ENCODE measurements at regions of chr17 and their contacts with region 1.

Region 1: GRCh38 chr17:8118769-8119580 is 661 bp upstream of the ALOXE3 start:
- DNase-seq: peak; percentile 75 to 92 (median 81)
- ATAC-seq: peak; percentile 60
- H3K4me3 ChIP-seq: peak overlapping the region; percentile 57
- H3K4me3 Mint-ChIP-seq: peak overlapping the region; percentile 99
- H3K27ac ChIP-seq: peak overlapping the region; percentile 7 to 50
- H3K27ac Mint-ChIP-seq: peak overlapping the region; percentile 100
- H3K4me1 ChIP-seq: peaks cover 65% of the 10 kb centered on the region
- H3K4me1 Mint-ChIP-seq: peaks cover 53% of the 10 kb centered on the region
- H3K27me3 ChIP-seq: peaks cover 45 to 53% of the 10 kb centered on the region in 2 experiments
- H3K27me3 Mint-ChIP-seq: peaks cover 66% of the 10 kb centered on the region
- CTCF ChIP-seq: peak; percentile 81

Region 2: GRCh38 chr17:8073627-8074484 is 45.1 kb before region 1 on chr17:
- CTCF ChIA-PET with region 1: interaction called, 22 read pairs
- POLR2A ChIA-PET with region 1: interaction called, 24 read pairs
- intact Hi-C with region 1: loop called in 1 of 2 experiments (anchors 2 kb)
- DNase-seq: peak; percentile 75 to 95 (median 83)
- ATAC-seq: peak; percentile 94
- H3K4me3 ChIP-seq: peak overlapping the region; percentile 31
- H3K4me3 Mint-ChIP-seq: peak overlapping the region; percentile 87
- H3K27ac ChIP-seq: no peak overlapping the region
- H3K27ac Mint-ChIP-seq: peak overlapping the region; percentile 18
- H3K4me1 ChIP-seq: peaks cover 25% of the 10 kb centered on the region
- H3K4me1 Mint-ChIP-seq: peaks cover 26% of the 10 kb centered on the region
- H3K27me3 ChIP-seq: peaks cover 27 to 39% of the 10 kb centered on the region in 2 experiments
- H3K27me3 Mint-ChIP-seq: peaks cover 44% of the 10 kb centered on the region
- CTCF ChIP-seq: peak; percentile 91

Region 3: GRCh38 chr17:8091033-8091687 is 27.8 kb before region 1 on chr17:
- CTCF ChIA-PET with region 1: interaction called, 24 read pairs
- POLR2A ChIA-PET with region 1: interaction called, 8 read pairs
- intact Hi-C with region 1: loop called in 1 of 2 experiments (anchors 2 kb)
- DNase-seq: no peak
- ATAC-seq: no peak
- H3K4me3 ChIP-seq: no peak overlapping the region
- H3K4me3 Mint-ChIP-seq: no peak overlapping the region
- H3K27ac ChIP-seq: no peak overlapping the region
- H3K27ac Mint-ChIP-seq: no peak overlapping the region
- H3K4me1 ChIP-seq: peaks cover 13% of the 10 kb centered on the region
- H3K4me1 Mint-ChIP-seq: peaks cover 17% of the 10 kb centered on the region
- H3K27me3 ChIP-seq: peaks cover 4 to 8% of the 10 kb centered on the region in 2 experiments
- H3K27me3 Mint-ChIP-seq: peaks cover 26% of the 10 kb centered on the region
- CTCF ChIP-seq: no peak

Region 4: DNA sequence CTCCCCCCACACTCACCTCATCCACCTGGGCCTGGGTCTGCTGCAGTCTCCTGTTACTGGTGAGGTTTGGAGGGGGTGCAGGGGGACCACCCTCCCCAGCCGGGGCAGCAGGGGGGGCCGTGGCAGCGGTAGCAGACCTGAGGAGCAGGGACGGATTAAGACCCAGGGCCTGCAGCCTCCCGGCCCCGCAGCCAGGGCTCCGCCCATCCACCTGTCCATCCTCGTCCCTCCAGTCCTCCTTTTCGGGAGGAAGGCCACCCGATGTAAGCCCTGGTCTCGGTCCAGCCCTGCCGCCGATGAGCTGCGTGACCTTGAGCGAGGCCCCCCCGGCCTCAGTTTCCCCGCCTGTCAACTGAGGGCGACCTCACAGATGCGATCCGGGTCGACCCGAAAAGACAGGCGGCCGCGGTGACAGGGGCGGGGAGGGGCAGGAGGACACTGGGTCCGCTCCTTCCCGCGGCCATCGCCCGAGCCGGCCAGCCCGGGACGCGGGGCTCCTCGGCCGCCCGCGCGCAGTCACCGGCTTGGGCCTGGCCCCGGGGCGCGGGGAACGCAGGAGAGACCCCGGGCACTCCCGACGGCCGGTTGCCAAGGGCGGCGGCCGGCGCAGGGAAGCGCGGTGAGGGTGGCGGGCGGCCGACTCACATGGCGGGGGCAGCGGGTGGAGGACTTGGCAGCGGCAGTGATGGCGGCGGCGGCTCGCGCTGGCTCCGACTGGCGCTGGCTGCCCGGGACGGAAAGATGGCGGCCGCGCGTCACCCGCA is 43.4 kb after region 1 on chr17 and contains the start of gene VAMP2:
- CTCF ChIA-PET with region 1: interaction called, 18 read pairs
- POLR2A ChIA-PET with region 1: interaction called, 49 read pairs
- intact Hi-C with region 1: loop called (anchors 2 to 5 kb)
- DNase-seq: peak; percentile 71 to 95 (median 83)
- ATAC-seq: peak; percentile 47
- H3K4me3 ChIP-seq: peak within 1 kb of the TSS; percentile 86
- H3K4me3 Mint-ChIP-seq: peak within 1 kb of the TSS; percentile 95
- H3K27ac ChIP-seq: peak within 1 kb of the TSS; percentile 94 to 96
- H3K27ac Mint-ChIP-seq: no peak within 1 kb of the TSS
- H3K4me1 ChIP-seq: peaks cover 72% of the 10 kb centered on the region
- H3K4me1 Mint-ChIP-seq: peaks cover 67% of the 10 kb centered on the region
- H3K27me3 ChIP-seq: no peaks in the 10 kb centered on the region
- H3K27me3 Mint-ChIP-seq: no peaks in the 10 kb centered on the region
- CTCF ChIP-seq: no peak
- total RNA-seq, gene VAMP2: 351 to 366 TPM

Region 5: GRCh38 chr17:8189711-8190477 is 70.9 kb after region 1 on chr17 and contains the start of gene BORCS6:
- CTCF ChIA-PET with region 1: interaction called, 8 read pairs
- POLR2A ChIA-PET with region 1: interaction called, 95 read pairs
- intact Hi-C with region 1: loop called (anchors 1 to 2 kb)
- DNase-seq: peak; percentile 84 to 99 (median 92)
- ATAC-seq: peak; percentile 68
- H3K4me3 ChIP-seq: peak within 1 kb of the TSS; percentile 93
- H3K4me3 Mint-ChIP-seq: no peak within 1 kb of the TSS
- H3K27ac ChIP-seq: peak within 1 kb of the TSS; percentile 83
- H3K27ac Mint-ChIP-seq: peak within 1 kb of the TSS; percentile 85
- H3K4me1 ChIP-seq: peaks cover 77% of the 10 kb centered on the region
- H3K4me1 Mint-ChIP-seq: peaks cover 12% of the 10 kb centered on the region
- H3K27me3 ChIP-seq: no peaks in the 10 kb centered on the region
- H3K27me3 Mint-ChIP-seq: no peaks in the 10 kb centered on the region
- CTCF ChIP-seq: no peak
- total RNA-seq, gene BORCS6: 6.1 to 6.4 TPM

Region 6: DNA sequence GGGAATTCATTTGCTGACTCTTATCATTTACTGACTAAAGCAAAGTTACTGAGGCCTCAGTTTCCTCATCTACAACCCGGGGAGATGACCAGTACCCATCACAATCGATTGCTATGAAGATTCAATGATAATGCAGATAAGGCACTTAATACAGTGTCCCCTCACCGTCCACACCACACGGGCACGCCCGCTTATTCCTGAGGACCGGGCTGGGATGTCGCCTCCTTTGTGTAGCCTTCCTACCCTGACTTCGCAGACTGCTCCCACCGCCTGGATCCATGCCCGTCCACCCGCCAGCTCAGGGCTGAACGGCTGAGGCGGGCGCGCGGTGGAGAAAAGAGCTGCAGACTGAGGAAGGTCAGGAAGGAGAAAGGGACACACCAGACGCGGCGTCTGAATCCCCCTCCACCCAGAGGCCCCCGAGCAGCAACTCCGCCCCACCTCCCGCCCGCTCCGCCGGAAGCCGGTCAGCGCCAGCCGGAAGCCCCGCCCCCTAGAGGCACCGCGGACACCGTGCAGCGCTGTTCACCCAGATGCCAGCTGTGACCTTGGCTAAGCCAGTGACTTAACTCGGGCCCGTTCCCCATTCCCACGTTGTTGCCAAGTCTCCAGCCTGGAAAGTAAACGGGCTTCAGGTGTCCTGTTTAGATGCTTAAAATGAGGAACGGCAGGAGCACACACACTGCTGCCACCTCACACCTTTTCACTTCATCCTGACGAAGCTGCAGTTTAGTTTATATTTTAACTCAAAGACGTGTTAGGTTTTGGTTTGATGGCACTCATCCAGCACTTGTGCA is 257.5 kb after region 1 on chr17 and contains the start of gene KRABD2:
- CTCF ChIA-PET with region 1: no interaction called
- POLR2A ChIA-PET with region 1: no interaction called
- intact Hi-C with region 1: loop called in 1 of 2 experiments (anchors 10 kb)
- DNase-seq: peak; percentile 82 to 93 (median 87)
- ATAC-seq: peak; percentile 99
- H3K4me3 ChIP-seq: peak within 1 kb of the TSS; percentile 98
- H3K4me3 Mint-ChIP-seq: peak within 1 kb of the TSS; percentile 86
- H3K27ac ChIP-seq: peak within 1 kb of the TSS; percentile 55 to 75
- H3K27ac Mint-ChIP-seq: peak within 1 kb of the TSS; percentile 86
- H3K4me1 ChIP-seq: peaks cover 43% of the 10 kb centered on the region
- H3K4me1 Mint-ChIP-seq: peaks cover 53% of the 10 kb centered on the region
- H3K27me3 ChIP-seq: no peaks in the 10 kb centered on the region
- H3K27me3 Mint-ChIP-seq: no peaks in the 10 kb centered on the region
- CTCF ChIP-seq: peak; percentile 65